ENCODE measurements at regions of chr22 and their contacts with region 1.

Region 1: DNA sequence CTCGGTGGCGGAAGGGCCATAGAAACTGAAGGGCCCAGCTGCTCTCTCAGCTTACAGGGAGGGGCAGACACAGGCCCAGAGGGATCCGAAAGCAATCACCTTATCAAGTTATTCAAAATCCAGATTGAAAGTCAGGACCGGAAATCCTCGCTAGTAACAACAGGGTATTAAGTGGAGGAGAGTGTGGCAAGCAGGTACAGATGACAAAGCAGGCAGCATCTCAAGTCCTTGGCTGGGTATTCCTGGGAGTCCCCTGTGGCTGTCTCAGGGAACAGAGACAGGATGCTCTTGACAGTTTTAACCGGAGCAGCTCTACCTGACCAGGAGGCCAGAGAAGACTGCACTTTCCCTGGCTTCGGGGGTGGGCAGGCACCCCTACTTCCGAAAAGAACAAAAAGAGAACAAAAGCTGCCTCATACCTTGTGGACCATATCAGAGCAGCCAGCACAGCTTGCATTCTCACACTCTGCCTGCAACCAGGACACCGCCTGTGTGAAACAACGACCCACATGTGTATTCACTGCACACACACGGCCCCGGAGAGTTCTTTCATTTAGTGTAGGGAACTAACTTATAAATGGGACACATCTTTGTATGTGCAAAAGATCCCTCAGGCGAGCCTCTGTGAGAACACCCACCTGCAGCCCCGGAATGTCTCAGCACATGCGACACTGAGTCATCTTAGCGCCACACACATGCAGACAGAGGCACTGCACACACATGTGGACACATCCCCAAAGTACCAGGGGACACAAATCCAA is 78.3 kb downstream of the MICAL3 start:
- DNase-seq: no peak
- H3K4me3 ChIP-seq: no peak overlapping the region
- H3K27ac ChIP-seq: peak overlapping the region; percentile 60 to 70
- H3K4me1 ChIP-seq: peaks cover 22 to 46% of the 10 kb centered on the region in 2 donors
- H3K27me3 ChIP-seq: no peaks in the 10 kb centered on the region
- CTCF ChIP-seq: no peak

Region 2: GRCh38 chr22:17874231-17874905 is 71.7 kb before region 1 on chr22:
- intact Hi-C with region 1: loop called (anchors 2 kb)
- DNase-seq: no peak
- H3K4me3 ChIP-seq: no peak overlapping the region
- H3K27ac ChIP-seq: no peak overlapping the region
- H3K4me1 ChIP-seq: no peaks in the 10 kb centered on the region
- H3K27me3 ChIP-seq: no peaks in the 10 kb centered on the region
- CTCF ChIP-seq: no peak

Region 3: GRCh38 chr22:17972385-17973181 is 26.5 kb after region 1 on chr22:
- intact Hi-C with region 1: no loop called
- DNase-seq: peak in 1 of 2 donors; percentile 69
- H3K4me3 ChIP-seq: no peak overlapping the region
- H3K27ac ChIP-seq: peak overlapping the region; percentile 58 to 76
- H3K4me1 ChIP-seq: peaks cover 13 to 37% of the 10 kb centered on the region in 2 donors
- H3K27me3 ChIP-seq: no peaks in the 10 kb centered on the region
- CTCF ChIP-seq: no peak